ENCODE measurements at regions of chr9 and their contacts with region 1.

Region 1: DNA sequence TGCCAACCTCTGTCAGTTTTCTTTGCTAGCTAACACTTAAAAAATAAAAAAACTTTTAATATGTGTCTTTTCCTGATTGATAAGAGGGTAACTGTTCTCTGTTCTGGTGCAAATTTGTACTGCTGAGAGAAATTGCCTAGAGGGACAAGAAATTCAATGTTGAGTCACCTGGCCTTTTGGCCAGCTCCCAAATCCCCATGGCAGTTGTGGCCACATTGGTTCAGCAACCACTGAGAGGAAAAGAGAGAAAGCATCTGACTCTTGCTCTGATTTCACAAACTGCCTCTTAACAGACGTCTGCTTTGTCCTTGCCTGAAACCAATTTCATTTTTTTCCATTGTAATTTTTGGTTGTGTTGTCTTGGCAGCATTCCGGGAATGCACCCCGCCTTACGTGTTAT is 42.4 kb downstream of the NTRK2 start:
- DNase-seq: peak; percentile 24
- H3K4me3 Mint-ChIP-seq: no peak overlapping the region
- H3K27ac Mint-ChIP-seq: no peak overlapping the region
- H3K4me1 Mint-ChIP-seq: peaks cover 15% of the 10 kb centered on the region
- H3K27me3 Mint-ChIP-seq: peaks cover 3% of the 10 kb centered on the region

Region 2: DNA sequence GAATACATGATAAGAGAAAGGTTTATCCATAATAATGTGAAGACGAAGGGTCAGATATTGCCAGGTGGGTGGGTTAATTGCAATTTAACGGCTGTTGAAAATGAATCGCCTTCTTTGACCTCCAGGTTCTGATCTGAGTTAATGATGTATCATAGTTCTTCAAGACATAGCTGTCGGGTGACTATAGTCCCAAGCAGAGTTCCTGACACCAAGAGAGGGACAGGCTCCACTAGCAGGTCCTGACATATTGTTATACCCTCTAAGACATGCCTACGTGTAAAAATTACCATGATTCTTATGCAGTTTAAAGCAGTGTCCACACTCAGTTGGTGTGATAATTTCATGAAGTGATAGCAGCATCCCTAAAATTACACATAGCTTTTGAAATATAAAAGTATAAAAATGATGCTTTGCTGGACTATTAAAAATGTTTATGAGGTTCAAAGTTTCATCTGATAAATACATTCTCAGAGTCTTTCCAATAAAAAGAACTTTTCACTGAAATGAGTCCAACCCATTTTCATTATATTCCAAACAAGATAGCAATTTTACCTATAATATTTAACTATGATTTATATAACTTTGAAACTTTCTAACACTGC is 10.6 kb after region 1 on chr9:
- CTCF ChIA-PET with region 1: interaction called, 4 read pairs
- POLR2A ChIA-PET with region 1: no interaction called
- intact Hi-C with region 1: loop called (anchors 1 kb)
- DNase-seq: no peak
- H3K4me3 Mint-ChIP-seq: no peak overlapping the region
- H3K27ac Mint-ChIP-seq: no peak overlapping the region
- H3K4me1 Mint-ChIP-seq: no peaks in the 10 kb centered on the region
- H3K27me3 Mint-ChIP-seq: peaks cover 2% of the 10 kb centered on the region

Region 3: GRCh38 chr9:84759300-84759750 is 47.4 kb after region 1 on chr9:
- CTCF ChIA-PET with region 1: no interaction called
- POLR2A ChIA-PET with region 1: no interaction called
- intact Hi-C with region 1: loop called (anchors 2 kb)
- DNase-seq: peak; percentile 65
- H3K4me3 Mint-ChIP-seq: peak overlapping the region; percentile 6
- H3K27ac Mint-ChIP-seq: peak overlapping the region; percentile 74
- H3K4me1 Mint-ChIP-seq: peaks cover 47% of the 10 kb centered on the region
- H3K27me3 Mint-ChIP-seq: no peaks in the 10 kb centered on the region